AG04450 (cell line): ENCODE measurements at regions of chr13 and their contacts with region 1.

Region 1: DNA sequence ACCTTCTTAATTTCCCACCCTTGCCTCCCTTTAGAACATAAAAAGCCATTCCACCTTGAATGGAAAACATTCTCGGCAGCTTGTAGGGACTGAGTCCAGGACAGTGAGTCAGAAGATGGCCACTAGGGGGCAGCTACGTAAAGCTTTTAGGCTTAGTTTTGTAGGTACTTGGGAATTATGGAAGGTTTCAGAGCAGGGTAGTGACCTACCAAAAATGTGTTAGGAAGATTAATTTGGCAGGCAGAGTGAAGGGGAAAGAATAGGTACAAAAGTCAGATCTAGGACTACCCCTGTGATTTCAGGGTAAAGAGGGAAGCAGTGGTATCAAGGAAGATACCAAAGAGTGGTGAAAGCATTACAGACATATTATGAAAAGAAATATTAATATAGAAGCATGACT is 198.4 kb downstream of the NDFIP2 start:
- DNase-seq: peak; percentile 26
- H3K4me3 ChIP-seq: no peak overlapping the region
- H3K27ac ChIP-seq: no peak overlapping the region
- H3K27me3 ChIP-seq: no peaks in the 10 kb centered on the region
- CTCF ChIP-seq: peak; percentile 74

Region 2: GRCh38 chr13:79121286-79121685 is 558.0 kb before region 1 on chr13:
- CTCF ChIA-PET with region 1: no interaction called
- POLR2A ChIA-PET with region 1: no interaction called
- DNase-seq: no peak
- H3K4me3 ChIP-seq: no peak overlapping the region
- H3K27ac ChIP-seq: no peak overlapping the region
- H3K27me3 ChIP-seq: no peaks in the 10 kb centered on the region
- CTCF ChIP-seq: no peak

Region 3: GRCh38 chr13:79557666-79558065 is 121.7 kb before region 1 on chr13:
- CTCF ChIA-PET with region 1: no interaction called
- POLR2A ChIA-PET with region 1: no interaction called
- DNase-seq: no peak
- H3K4me3 ChIP-seq: no peak overlapping the region
- H3K27ac ChIP-seq: no peak overlapping the region
- H3K27me3 ChIP-seq: no peaks in the 10 kb centered on the region
- CTCF ChIP-seq: no peak

Region 4: DNA sequence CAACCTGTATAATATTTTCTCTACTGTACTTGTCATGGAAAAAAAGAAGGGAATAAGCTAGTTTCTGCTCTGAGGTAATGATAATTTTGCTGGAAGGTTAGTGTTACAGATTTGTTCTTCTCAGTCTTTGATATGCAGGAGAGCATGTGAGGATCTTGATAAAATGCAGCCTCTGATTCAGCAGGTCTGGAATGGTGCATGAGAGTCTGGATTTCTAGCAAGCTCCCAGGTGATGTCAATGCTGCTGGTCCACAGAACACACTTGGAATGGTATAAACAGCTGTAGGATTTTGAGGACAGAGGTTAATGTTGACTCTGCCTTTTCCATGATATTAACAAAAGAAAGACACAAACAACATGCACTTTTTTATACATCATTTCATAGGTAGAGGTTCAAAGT is 24.8 kb before region 1 on chr13:
- CTCF ChIA-PET with region 1: no interaction called
- POLR2A ChIA-PET with region 1: no interaction called
- DNase-seq: no peak
- H3K4me3 ChIP-seq: no peak overlapping the region
- H3K27ac ChIP-seq: no peak overlapping the region
- H3K27me3 ChIP-seq: peaks cover 3% of the 10 kb centered on the region
- CTCF ChIP-seq: no peak

Region 5: GRCh38 chr13:79667771-79668170 is 11.6 kb before region 1 on chr13:
- CTCF ChIA-PET with region 1: interaction called, 13 read pairs
- POLR2A ChIA-PET with region 1: no interaction called
- DNase-seq: no peak
- H3K4me3 ChIP-seq: no peak overlapping the region
- H3K27ac ChIP-seq: no peak overlapping the region
- H3K27me3 ChIP-seq: no peaks in the 10 kb centered on the region
- CTCF ChIP-seq: no peak